Activated CD4-positive, alpha-beta memory T cell treated with anti-CD3 and anti-CD28 coated beads for 36 hours (primary cell): ENCODE measurements at regions of chr10 and their contacts with region 1.

Region 1: GRCh38 chr10:60733189-60733822 is 45.0 kb upstream of the CDK1 start:
- DNase-seq: peak; percentile 55
- H3K4me3 Mint-ChIP-seq: peak overlapping the region; percentile 68
- H3K27ac Mint-ChIP-seq: no peak overlapping the region
- H3K4me1 Mint-ChIP-seq: peaks cover 27% of the 10 kb centered on the region
- H3K27me3 Mint-ChIP-seq: peaks cover 2% of the 10 kb centered on the region

Region 2: DNA sequence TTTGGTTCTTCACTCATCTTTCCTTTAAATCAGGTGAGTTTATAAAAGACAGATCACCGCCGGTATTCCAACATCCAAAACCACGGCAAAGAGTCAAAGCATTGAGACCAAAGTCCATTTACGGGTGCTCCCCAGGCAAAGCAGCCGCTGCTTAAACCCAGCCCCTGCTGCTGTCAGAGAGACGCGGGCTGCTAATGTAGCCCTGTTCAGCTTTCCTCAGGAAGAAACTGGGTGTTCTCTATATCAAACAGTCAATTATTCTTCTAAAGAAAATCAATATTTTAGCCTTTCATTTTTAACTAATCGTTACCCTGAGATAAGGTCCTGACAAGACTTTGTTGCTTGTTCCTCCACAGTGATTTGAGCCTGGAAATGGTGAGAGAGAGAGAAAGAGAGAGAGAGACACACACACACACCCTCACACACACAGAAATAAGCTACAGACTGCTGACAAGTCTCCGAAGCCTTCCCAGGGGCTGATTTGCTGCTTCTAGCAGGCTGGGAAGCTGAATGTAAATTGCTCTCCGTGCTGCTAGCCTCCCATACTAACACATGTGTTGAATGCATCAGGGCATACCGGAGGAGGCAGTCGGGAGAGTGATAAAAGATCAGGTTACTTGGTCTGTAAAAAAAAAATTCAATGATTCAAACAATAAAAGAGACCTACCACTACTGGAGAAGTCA is 160.7 kb before region 1 on chr10:
- CTCF ChIA-PET with region 1: no interaction called
- POLR2A ChIA-PET with region 1: no interaction called
- intact Hi-C with region 1: loop called (anchors 1 kb)
- DNase-seq: peak; percentile 51
- H3K4me3 Mint-ChIP-seq: peak overlapping the region; percentile 83
- H3K27ac Mint-ChIP-seq: peak overlapping the region; percentile 87
- H3K4me1 Mint-ChIP-seq: peaks cover 54% of the 10 kb centered on the region
- H3K27me3 Mint-ChIP-seq: no peaks in the 10 kb centered on the region

Region 3: GRCh38 chr10:60652628-60653027 is 80.7 kb before region 1 on chr10:
- CTCF ChIA-PET with region 1: no interaction called
- POLR2A ChIA-PET with region 1: no interaction called
- intact Hi-C with region 1: loop called (anchors 5 kb)
- DNase-seq: no peak
- H3K4me3 Mint-ChIP-seq: no peak overlapping the region
- H3K27ac Mint-ChIP-seq: no peak overlapping the region
- H3K4me1 Mint-ChIP-seq: peaks cover 30% of the 10 kb centered on the region
- H3K27me3 Mint-ChIP-seq: no peaks in the 10 kb centered on the region

Region 4: DNA sequence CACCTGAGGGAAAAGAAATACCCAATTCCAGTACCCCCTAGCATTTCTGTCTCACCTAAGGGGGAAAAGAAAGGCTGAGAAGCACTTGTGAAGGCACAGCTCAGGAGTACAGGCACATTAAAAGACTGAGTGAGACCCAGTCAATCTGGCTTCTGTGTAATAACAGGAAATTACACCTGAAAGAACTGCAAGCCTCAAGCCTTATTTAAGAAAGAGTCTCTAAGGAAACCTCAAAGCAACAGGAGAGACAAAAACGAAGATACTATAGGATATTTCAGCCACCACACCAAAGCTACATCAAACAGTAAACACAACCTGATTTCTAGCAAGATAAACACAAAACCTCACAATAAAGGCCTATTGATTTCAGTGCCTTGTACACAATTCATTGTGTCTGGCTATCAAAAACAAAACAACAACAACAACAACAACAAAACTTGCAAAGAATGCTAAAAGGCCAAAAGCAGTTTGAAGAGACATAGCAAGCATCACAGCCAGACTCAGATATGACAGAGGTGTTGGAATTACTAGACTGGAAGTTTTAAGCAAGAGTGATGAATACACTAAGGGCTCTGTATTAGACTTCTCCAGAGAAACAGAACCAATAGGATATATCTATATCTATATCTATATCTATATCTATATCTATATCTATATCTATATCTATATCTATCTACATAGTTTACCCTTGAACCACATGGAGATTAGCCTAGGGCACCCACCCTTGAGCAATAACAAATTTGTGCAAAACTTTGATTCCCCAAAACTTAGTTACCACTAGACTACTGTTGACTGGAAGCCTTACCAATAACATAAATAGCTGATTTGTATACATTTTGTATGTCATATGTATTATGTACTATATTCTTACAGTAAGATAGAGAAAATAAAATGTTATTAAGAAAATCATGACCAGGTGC is 24.4 kb before region 1 on chr10:
- CTCF ChIA-PET with region 1: interaction called, 3 read pairs
- POLR2A ChIA-PET with region 1: interaction called, 5 read pairs
- intact Hi-C with region 1: loop called (anchors 1 kb)
- DNase-seq: no peak
- H3K4me3 Mint-ChIP-seq: no peak overlapping the region
- H3K27ac Mint-ChIP-seq: peak overlapping the region; percentile 76
- H3K4me1 Mint-ChIP-seq: peaks cover 54% of the 10 kb centered on the region
- H3K27me3 Mint-ChIP-seq: no peaks in the 10 kb centered on the region

Region 5: DNA sequence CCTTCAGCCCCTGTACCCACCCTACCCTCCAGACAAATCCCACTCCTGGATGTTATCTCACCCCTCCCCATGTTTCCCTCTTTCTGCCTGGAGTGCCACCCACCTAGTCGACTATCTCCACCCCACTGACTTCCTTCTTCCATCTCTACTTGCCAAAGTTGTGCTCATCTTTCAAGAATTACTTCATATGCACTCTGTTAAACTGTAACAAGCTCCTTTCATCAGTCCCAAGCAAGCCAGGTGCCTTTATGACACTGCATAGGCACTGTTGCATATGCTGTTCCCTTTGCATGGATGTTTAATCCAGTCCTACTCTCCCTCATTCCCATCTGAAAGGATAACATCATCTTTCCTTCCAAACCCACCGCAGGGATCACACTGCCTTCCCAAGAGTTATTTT is 36.1 kb after region 1 on chr10:
- CTCF ChIA-PET with region 1: interaction called, 4 read pairs
- POLR2A ChIA-PET with region 1: no interaction called
- intact Hi-C with region 1: loop called (anchors 2 kb)
- DNase-seq: no peak
- H3K4me3 Mint-ChIP-seq: no peak overlapping the region
- H3K27ac Mint-ChIP-seq: no peak overlapping the region
- H3K4me1 Mint-ChIP-seq: peaks cover 4% of the 10 kb centered on the region
- H3K27me3 Mint-ChIP-seq: no peaks in the 10 kb centered on the region

Region 6: GRCh38 chr10:60778214-60779029 is 45.1 kb after region 1 on chr10 and contains the start of gene CDK1:
- CTCF ChIA-PET with region 1: no interaction called
- POLR2A ChIA-PET with region 1: interaction called, 3 read pairs
- intact Hi-C with region 1: loop called (anchors 2 kb)
- DNase-seq: peak; percentile 98
- H3K4me3 Mint-ChIP-seq: peak within 1 kb of the TSS; percentile 91
- H3K27ac Mint-ChIP-seq: peak within 1 kb of the TSS; percentile 92
- H3K4me1 Mint-ChIP-seq: peaks cover 19% of the 10 kb centered on the region
- H3K27me3 Mint-ChIP-seq: no peaks in the 10 kb centered on the region
- total RNA-seq, gene CDK1: 153 TPM

Region 7: GRCh38 chr10:61140765-61141392 is 407.6 kb after region 1 on chr10:
- CTCF ChIA-PET with region 1: no interaction called
- POLR2A ChIA-PET with region 1: no interaction called
- intact Hi-C with region 1: no loop called
- DNase-seq: no peak
- H3K4me3 Mint-ChIP-seq: no peak overlapping the region
- H3K27ac Mint-ChIP-seq: no peak overlapping the region
- H3K4me1 Mint-ChIP-seq: no peaks in the 10 kb centered on the region
- H3K27me3 Mint-ChIP-seq: peaks cover 1% of the 10 kb centered on the region